Right ventricle myocardium inferior (tissue), 1 donor: ENCODE measurements at regions of chr9 and their contacts with region 1.

Region 1: DNA sequence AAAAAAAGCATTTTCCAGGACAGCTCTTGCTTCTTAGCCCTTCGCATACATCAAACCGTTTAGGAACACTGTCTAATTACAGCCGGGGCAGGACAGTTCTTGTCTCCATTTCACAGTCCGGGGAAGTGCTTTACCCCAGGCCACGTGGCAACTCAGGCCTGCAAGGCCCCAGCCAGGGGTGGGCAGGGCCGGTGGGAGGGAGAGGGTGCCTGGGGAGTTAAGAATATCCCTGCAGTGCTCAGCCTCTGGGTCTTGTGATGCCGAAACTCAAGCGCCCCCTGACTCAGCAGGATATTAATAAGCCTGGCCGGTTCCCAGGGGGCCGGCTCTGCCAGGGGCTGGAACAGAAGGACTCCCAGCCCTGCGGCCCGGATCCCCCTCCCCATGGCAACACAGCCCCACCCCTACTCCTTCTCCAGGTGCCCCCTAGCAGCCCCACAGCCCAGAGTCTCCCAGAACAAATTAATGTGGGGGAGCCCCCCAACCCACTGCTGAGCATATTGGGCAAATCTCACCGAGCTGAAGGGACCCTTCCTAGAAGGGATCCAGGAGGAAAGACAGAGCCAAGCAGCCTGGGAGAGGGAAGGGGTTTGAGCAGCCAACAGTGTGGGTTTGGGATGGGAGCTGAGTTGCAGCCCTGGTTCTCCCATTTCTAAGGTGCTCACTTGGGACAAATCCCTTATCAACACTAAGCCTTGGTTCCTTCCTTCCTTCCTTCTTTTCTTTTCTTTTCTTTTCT is 45.3 kb downstream of the PLPP7 start:
- DNase-seq: peak; percentile 86
- ATAC-seq: peak; percentile 92

Region 2: DNA sequence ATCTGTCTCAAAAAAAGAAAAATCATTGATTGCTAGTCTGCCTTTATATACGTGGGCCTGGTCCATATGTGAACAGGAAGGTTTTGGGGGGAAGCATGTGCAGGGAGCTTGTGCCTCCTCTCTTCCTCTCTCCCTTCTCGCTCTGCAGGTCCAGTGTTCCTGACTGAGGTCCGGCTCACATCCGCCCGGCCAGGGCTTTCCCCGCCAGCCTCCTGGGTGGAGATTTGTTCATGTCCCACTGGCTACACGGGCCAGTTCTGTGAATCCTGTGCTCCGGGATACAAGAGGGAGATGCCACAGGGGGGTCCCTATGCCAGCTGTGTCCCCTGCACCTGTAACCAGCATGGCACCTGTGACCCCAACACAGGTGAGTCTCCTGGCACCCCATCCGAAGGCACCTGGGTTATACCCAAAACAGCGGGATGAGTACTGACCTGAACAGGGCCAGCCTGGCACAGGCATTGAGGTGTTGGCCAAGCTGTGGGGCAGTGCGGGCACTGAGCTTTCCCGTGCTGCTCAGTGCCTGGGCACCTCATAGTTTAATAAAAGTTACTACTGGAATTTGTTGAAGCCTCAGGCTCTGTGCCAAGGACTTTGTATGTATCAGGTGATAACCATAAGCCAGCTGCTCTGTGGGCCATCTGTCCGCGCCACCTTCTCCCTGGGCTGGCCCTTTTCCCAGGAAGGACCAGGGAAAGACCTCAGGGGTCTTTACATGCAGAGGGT is 277.9 kb before region 1 on chr9:
- intact Hi-C with region 1: loop called (anchors 1 kb)
- DNase-seq: no peak
- ATAC-seq: peak; percentile 32

Region 3: DNA sequence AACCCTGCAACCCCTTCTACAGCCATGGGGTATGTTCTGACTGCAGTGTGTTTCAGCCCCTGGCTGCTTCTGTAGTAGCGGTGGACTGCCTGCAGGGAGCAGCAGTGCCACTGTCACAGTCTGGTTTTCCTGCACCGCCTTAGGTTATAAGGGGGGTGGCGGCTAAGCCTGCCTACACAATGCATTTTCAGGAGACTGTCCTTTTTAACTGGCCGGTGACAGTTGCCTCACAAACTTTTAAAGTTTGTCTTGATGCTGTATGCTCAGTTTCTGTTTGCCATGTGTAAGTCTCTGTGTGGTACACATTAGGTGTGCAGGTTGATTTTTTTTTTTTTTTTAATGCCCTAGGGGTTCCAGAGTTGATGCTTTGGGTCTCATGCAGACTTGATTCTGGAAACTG is 156.4 kb before region 1 on chr9:
- intact Hi-C with region 1: loop called (anchors 1 kb)
- DNase-seq: peak; percentile 81
- ATAC-seq: peak; percentile 95

Region 4: GRCh38 chr9:131277910-131278701 is 56.7 kb before region 1 on chr9:
- intact Hi-C with region 1: loop called (anchors 2 kb)
- DNase-seq: peak; percentile 90
- ATAC-seq: peak; percentile 66

Region 5: DNA sequence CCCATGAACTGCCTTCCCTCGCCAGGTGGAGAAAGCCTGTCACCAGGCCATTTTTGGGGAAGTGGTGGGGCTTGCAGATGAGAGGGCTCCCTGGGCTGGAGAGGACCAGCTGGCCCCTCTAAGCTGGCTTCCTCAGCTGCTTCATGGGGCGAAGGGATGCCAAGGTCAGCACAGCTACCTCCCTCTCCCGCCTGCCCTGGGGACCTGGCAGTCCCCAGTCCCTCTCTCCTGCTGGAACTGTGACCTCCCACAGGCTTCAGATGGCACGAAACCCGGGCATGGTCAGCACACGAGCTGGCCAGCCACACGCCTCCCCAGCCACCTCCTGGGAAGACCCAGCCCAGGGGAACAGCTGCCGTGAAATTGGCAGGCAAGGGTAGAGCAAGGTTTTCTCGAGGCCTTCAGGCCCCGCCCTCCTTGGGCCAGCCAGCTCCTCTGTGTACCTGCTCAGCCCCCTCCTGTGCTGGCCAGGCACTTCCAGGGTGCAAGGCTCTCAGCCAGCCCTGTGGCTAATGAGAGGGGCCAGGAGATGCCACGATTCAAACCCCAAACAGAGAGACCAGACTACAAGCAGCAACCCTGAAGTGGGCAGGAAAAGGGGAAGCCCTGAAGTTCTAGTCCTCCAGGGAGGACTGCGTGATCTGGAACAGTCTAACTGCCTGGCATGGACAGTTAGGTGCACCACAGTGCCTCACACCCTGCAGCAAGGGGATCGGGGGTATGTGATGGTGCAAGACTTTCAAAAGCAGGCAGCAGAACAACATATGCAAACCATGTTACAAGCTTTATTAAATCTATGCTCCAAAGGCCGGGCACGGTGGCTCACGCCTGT is 32.3 kb before region 1 on chr9:
- intact Hi-C with region 1: loop called (anchors 2 kb)
- DNase-seq: peak; percentile 71
- ATAC-seq: peak; percentile 58

Region 6: DNA sequence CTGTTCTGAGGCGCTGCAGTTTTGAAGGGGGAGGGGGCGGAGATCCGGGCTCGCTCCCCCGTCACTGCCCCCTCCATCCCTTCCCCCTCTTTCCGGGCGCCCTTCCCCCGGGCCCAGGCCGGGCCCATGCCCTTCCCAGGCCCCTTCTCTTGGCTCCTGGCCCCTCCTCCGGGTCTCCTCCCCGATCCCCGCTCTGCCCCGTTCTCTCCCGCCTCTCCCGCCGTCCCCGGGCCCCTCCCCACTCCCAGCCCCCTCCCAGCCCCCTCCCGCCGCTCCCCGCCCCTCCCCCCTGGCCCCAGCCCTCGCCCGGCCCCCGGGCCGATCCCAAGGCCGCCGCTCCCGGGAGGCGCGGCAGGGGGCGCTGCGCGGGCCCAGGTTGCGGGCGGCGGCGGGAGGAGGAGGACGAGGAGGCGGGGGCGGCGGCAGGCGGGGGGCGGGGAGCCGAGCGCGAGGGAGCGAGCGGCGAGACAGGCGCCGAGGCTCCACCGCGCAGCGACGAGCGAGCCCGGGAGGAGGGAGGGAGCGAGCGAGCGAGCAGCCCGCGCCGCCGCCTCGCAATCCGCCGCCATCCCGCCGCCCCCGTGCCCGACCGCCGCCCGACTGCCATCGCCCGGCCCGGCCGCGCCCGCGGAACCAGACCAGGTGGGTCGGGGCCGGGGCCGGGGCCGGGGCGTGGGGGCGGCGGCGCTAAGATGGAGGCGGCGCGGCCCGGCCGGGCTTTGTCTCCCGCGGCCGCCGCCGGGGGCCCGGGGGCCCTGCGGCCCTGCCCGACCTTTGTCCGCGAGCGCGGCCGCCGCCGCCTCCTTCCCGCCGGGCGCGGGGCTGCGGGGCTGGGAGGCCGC is 59.0 kb after region 1 on chr9 and contains the start of gene PRRC2B:
- intact Hi-C with region 1: no loop called
- DNase-seq: peak; percentile 94
- ATAC-seq: peak; percentile 85
- total RNA-seq, gene PRRC2B: 142 TPM